AG04449 (cell line): ENCODE measurements at regions of chr7 and their contacts with region 1.

Region 1: DNA sequence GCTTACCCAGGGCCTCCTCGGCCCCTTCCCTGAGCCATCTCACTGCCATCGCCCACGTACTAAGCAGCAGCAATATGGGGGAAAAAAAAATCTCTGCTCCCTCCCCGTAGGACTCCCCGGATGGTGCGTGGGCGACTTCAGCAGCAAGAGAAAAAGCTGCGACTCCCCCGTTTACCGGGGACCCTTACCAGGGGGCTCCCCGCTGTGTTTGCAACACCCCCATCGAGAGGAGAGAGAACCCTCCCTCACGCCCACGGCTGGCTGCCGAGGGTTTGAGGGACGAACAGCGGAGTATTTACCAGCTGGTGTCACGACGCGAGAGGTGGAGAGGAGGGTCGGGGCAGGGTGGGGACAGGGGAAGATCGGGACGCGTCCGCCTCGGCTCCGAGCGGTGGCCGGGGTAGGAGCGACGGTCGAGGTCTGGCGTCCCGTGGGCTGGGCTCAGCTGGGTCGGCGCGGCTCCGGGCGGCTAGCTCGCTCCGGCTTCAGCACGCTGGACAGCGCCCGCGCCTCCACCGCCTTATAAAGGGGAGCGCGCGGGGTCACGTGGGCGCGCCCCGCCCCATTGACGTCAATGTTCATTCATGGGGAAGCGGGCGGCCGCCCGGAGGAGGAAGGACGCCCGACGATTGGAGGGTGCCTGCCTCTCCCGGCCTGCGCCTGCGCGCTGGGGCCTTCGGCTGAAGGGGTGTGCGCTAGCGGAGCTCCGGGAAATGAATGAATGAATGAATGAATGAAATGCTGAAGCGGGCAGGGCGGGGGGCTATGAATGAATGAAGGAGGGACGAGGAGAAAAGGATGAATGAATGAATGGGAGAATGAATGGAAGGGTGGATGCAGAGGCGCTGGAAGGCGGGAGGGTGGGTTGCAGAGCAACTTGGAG is at the start of gene VGF:
- DNase-seq: no peak
- H3K4me3 ChIP-seq: peak within 1 kb of the TSS; percentile 13
- CTCF ChIP-seq: no peak

Region 2: GRCh38 chr7:101153969-101154692 is 11.2 kb before region 1 on chr7 and contains the start of gene AP1S1:
- CTCF ChIA-PET with region 1: interaction called, 30 read pairs
- POLR2A ChIA-PET with region 1: no interaction called
- DNase-seq: no peak
- H3K4me3 ChIP-seq: peak within 1 kb of the TSS; percentile 83
- CTCF ChIP-seq: no peak

Region 3: DNA sequence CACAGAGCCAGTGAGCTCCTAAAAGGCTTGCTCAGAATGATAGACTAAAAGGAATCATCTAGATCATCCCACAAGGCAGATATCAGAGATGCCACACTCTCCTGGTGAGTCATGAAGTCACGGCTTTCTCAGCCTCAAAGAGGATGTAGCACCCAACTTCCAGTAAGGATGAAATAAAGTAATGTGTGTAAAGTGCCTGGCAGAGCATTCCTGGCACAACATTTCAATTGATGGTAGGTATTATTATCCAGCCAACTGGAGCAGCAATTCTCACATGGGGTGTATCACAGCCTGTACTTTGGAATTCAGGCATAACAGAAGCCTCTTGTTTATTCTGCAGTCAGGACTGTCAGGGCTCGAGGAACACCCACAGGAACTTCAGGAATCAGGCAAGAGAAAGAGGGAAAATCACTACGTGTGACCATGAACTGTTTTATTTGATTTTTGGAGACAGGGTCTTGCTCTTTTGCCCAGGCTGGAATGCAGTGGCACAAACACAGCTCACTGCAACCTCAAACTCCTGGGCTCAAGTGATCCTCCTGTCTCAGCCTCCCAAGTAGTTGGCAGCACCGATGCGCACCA is 20.0 kb after region 1 on chr7:
- CTCF ChIA-PET with region 1: interaction called, 16 read pairs
- POLR2A ChIA-PET with region 1: no interaction called
- DNase-seq: no peak
- H3K4me3 ChIP-seq: no peak overlapping the region
- CTCF ChIP-seq: no peak

Region 4: GRCh38 chr7:101217388-101218235 is 52.3 kb after region 1 on chr7 and contains the starts of genes PLOD3 and ZNHIT1:
- CTCF ChIA-PET with region 1: interaction called, 12 read pairs
- POLR2A ChIA-PET with region 1: interaction called, 5 read pairs
- DNase-seq: peak; percentile 85
- H3K4me3 ChIP-seq: peak within 1 kb of the TSS; percentile 91
- CTCF ChIP-seq: peak; percentile 13